Activated CD4-positive, alpha-beta T cell treated with anti-CD3 and anti-CD28 coated beads, Interleukin-2, amount 10 ng/mL, durations not matched to agents 7 days and 5 days (primary cell): ENCODE measurements at regions of chr10 and their contacts with region 1.

Region 1: GRCh38 chr10:7666253-7667081 is at the start of gene ITIH5:
- DNase-seq: no peak
- H3K4me3 Mint-ChIP-seq: peak within 1 kb of the TSS; percentile 47
- H3K27ac Mint-ChIP-seq: no peak within 1 kb of the TSS
- H3K4me1 Mint-ChIP-seq: peaks cover 11% of the 10 kb centered on the region
- H3K27me3 Mint-ChIP-seq: peaks cover 64% of the 10 kb centered on the region
- total RNA-seq, gene ITIH5: not detected

Region 2: GRCh38 chr10:7567911-7568620 is 98.4 kb before region 1 on chr10:
- CTCF ChIA-PET with region 1: no interaction called
- POLR2A ChIA-PET with region 1: interaction called, 14 read pairs
- DNase-seq: no peak
- H3K4me3 Mint-ChIP-seq: no peak overlapping the region
- H3K27ac Mint-ChIP-seq: no peak overlapping the region
- H3K4me1 Mint-ChIP-seq: no peaks in the 10 kb centered on the region
- H3K27me3 Mint-ChIP-seq: no peaks in the 10 kb centered on the region

Region 3: GRCh38 chr10:7649673-7650300 is 16.7 kb before region 1 on chr10:
- CTCF ChIA-PET with region 1: no interaction called
- POLR2A ChIA-PET with region 1: no interaction called
- DNase-seq: no peak
- H3K4me3 Mint-ChIP-seq: no peak overlapping the region
- H3K27ac Mint-ChIP-seq: no peak overlapping the region
- H3K4me1 Mint-ChIP-seq: no peaks in the 10 kb centered on the region
- H3K27me3 Mint-ChIP-seq: peaks cover 16% of the 10 kb centered on the region

Region 4: GRCh38 chr10:7696545-7696944 is 30.1 kb after region 1 on chr10:
- CTCF ChIA-PET with region 1: no interaction called
- POLR2A ChIA-PET with region 1: no interaction called
- DNase-seq: no peak
- H3K4me3 Mint-ChIP-seq: no peak overlapping the region
- H3K27ac Mint-ChIP-seq: no peak overlapping the region
- H3K4me1 Mint-ChIP-seq: no peaks in the 10 kb centered on the region
- H3K27me3 Mint-ChIP-seq: no peaks in the 10 kb centered on the region